Activated B cell treated with CpG ODN at 0.5 μM for 24 hours (primary cell): ENCODE measurements at regions of chr22 and their contacts with region 1.

Region 1: GRCh38 chr22:23857606-23858483 is at the start of gene SLC2A11:
- DNase-seq: peak; percentile 90
- ATAC-seq: peak; percentile 94
- H3K4me3 Mint-ChIP-seq: peak within 1 kb of the TSS; percentile 91
- H3K27ac Mint-ChIP-seq: peak within 1 kb of the TSS; percentile 94
- H3K4me1 Mint-ChIP-seq: peaks cover 22% of the 10 kb centered on the region
- H3K27me3 Mint-ChIP-seq: no peaks in the 10 kb centered on the region
- CTCF ChIP-seq: no peak
- total RNA-seq, gene SLC2A11: 24.0 and 30.2 TPM in 2 replicates

Region 2: GRCh38 chr22:23786752-23787599 is 70.9 kb before region 1 on chr22 and contains the start of gene SMARCB1:
- CTCF ChIA-PET with region 1: no interaction called
- POLR2A ChIA-PET with region 1: interaction called, 18 read pairs
- intact Hi-C with region 1: no loop called
- DNase-seq: peak; percentile 89
- ATAC-seq: peak; percentile 85
- H3K4me3 Mint-ChIP-seq: peak within 1 kb of the TSS; percentile 90
- H3K27ac Mint-ChIP-seq: peak within 1 kb of the TSS; percentile 88
- H3K4me1 Mint-ChIP-seq: peaks cover 51% of the 10 kb centered on the region
- H3K27me3 Mint-ChIP-seq: no peaks in the 10 kb centered on the region
- CTCF ChIP-seq: no peak
- total RNA-seq, gene SMARCB1: 156 and 161 TPM in 2 replicates

Region 3: GRCh38 chr22:23800297-23801237 is 57.3 kb before region 1 on chr22:
- CTCF ChIA-PET with region 1: no interaction called
- POLR2A ChIA-PET with region 1: interaction called, 14 read pairs
- intact Hi-C with region 1: no loop called
- DNase-seq: peak; percentile 68
- ATAC-seq: peak; percentile 77
- H3K4me3 Mint-ChIP-seq: peak overlapping the region; percentile 49
- H3K27ac Mint-ChIP-seq: peak overlapping the region; percentile 97
- H3K4me1 Mint-ChIP-seq: peaks cover 78% of the 10 kb centered on the region
- H3K27me3 Mint-ChIP-seq: no peaks in the 10 kb centered on the region
- CTCF ChIP-seq: no peak

Region 4: GRCh38 chr22:23893943-23894709 is 36.3 kb after region 1 on chr22 and contains the start of gene MIF:
- CTCF ChIA-PET with region 1: interaction called, 6 read pairs
- POLR2A ChIA-PET with region 1: interaction called, 84 read pairs
- intact Hi-C with region 1: loop called (anchors 5 kb)
- DNase-seq: peak; percentile 100
- ATAC-seq: peak; percentile 88
- H3K4me3 Mint-ChIP-seq: peak within 1 kb of the TSS; percentile 96
- H3K27ac Mint-ChIP-seq: peak within 1 kb of the TSS; percentile 96
- H3K4me1 Mint-ChIP-seq: peaks cover 25% of the 10 kb centered on the region
- H3K27me3 Mint-ChIP-seq: no peaks in the 10 kb centered on the region
- CTCF ChIP-seq: peak; percentile 44
- total RNA-seq, gene MIF: 308 and 349 TPM in 2 replicates

Region 5: GRCh38 chr22:24011735-24012068 is 153.9 kb after region 1 on chr22:
- CTCF ChIA-PET with region 1: no interaction called
- POLR2A ChIA-PET with region 1: interaction called, 12 read pairs
- intact Hi-C with region 1: no loop called
- DNase-seq: no peak
- ATAC-seq: no peak
- H3K4me3 Mint-ChIP-seq: peak overlapping the region; percentile 98
- H3K27ac Mint-ChIP-seq: peak overlapping the region; percentile 88
- H3K4me1 Mint-ChIP-seq: peaks cover 23% of the 10 kb centered on the region
- H3K27me3 Mint-ChIP-seq: no peaks in the 10 kb centered on the region
- CTCF ChIP-seq: no peak

Region 6: GRCh38 chr22:24133187-24133965 is 275.5 kb after region 1 on chr22:
- CTCF ChIA-PET with region 1: no interaction called
- POLR2A ChIA-PET with region 1: no interaction called
- intact Hi-C with region 1: no loop called
- DNase-seq: no peak
- ATAC-seq: no peak
- H3K4me3 Mint-ChIP-seq: no peak overlapping the region
- H3K27ac Mint-ChIP-seq: no peak overlapping the region
- H3K4me1 Mint-ChIP-seq: peaks cover 18% of the 10 kb centered on the region
- H3K27me3 Mint-ChIP-seq: no peaks in the 10 kb centered on the region
- CTCF ChIP-seq: no peak